Left colon (tissue), 2 donors: ENCODE measurements at regions of chr12 and their contacts with region 1.

Region 1: DNA sequence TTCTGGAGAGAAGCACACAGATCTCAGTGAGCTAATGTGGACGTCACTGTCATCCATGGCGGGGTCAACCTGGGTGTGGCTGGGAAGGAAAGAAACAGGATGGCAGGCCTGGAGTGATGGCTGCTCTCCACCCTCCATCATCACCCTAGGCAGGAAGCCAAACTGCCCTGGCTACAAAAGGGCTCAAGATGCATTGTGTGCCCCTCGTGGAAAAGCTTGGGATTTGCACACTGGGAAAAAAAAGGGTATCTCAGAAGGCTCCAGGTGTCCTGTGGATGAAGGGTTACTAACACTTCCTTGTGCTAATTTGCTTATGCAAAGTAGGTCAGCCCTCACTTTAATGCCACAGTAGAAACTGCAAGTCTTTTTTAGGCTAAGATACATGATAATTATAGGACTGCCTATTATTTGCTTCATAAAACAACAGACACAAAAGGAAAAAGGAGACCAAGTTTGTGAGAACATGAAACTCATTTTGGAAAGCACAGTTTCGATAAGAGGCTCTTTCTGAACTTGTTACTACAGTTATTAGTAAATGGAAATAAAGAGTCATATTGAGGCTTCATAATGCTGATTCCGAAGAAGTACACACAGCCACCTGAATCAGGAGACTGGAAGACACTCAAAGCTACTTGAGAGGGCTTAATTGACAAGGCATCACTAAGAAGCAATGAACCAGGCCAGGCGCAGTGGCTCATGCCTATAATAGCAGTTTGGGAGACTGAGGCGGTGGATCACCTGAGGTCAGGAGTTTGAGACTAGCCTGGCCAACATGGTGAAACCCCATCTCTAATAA is 18.9 kb downstream of the RFC5 start:
- DNase-seq: peak in 1 of 2 donors; percentile 26
- ATAC-seq: peak; percentile 65

Region 2: GRCh38 chr12:117874842-117875434 is 160.5 kb before region 1 on chr12:
- intact Hi-C with region 1: loop called in 1 of 2 experiments (anchors 10 kb)
- DNase-seq: peak; percentile 48 to 75
- ATAC-seq: peak; percentile 90

Region 3: DNA sequence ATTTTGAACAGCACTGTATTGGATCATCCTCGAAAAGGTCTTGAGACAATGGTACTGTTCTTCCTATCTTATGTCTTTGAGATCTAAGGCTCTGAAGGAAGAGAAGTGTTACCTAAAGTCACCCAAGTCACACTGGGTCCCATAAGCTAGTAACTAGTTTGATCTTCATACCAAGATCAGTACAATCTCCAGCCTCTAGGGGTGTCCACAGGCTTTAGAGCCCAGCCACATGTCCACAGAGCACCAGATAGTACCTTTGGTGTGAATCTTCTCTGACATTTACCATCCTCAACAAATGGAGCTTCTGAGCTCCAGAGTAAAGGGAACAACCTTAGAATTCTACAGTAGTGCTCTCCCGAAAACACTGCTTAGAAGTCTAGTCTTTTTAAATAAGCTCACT is 145.3 kb before region 1 on chr12:
- intact Hi-C with region 1: no loop called
- DNase-seq: no peak
- ATAC-seq: peak; percentile 40